Activated naive CD4-positive, alpha-beta T cell treated with anti-CD3 and anti-CD28 coated beads for 36 hours (primary cell): ENCODE measurements at regions of chr10 and their contacts with region 1.

Region 1: DNA sequence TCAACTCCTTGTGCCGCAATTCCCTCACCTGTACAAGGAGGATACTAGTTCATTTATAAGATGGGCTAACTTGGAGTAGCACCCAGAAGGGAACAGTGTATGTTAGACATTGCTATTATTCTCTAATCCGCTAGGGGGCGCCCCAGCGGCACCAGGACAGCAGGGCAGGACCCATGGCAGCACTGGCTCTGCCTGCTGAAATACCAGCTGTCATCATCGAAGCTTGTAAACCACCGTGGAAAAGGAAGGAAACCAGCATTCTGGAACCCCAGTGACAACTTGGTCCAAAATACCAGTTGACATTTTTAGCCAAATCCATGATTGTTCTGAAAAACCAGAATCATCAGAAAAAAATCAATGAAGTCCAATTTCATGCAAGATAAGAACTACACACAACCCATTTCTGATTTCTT is 134.4 kb downstream of the ITGA8 start:
- DNase-seq: peak; percentile 64
- H3K4me3 Mint-ChIP-seq: no peak overlapping the region
- H3K27ac Mint-ChIP-seq: no peak overlapping the region
- H3K4me1 Mint-ChIP-seq: no peaks in the 10 kb centered on the region
- H3K27me3 Mint-ChIP-seq: peaks cover 9% of the 10 kb centered on the region

Region 2: GRCh38 chr10:15548381-15548780 is 36.9 kb before region 1 on chr10:
- CTCF ChIA-PET with region 1: no interaction called
- intact Hi-C with region 1: no loop called
- DNase-seq: no peak
- H3K4me3 Mint-ChIP-seq: no peak overlapping the region
- H3K27ac Mint-ChIP-seq: no peak overlapping the region
- H3K4me1 Mint-ChIP-seq: no peaks in the 10 kb centered on the region
- H3K27me3 Mint-ChIP-seq: peaks cover 9% of the 10 kb centered on the region

Region 3: DNA sequence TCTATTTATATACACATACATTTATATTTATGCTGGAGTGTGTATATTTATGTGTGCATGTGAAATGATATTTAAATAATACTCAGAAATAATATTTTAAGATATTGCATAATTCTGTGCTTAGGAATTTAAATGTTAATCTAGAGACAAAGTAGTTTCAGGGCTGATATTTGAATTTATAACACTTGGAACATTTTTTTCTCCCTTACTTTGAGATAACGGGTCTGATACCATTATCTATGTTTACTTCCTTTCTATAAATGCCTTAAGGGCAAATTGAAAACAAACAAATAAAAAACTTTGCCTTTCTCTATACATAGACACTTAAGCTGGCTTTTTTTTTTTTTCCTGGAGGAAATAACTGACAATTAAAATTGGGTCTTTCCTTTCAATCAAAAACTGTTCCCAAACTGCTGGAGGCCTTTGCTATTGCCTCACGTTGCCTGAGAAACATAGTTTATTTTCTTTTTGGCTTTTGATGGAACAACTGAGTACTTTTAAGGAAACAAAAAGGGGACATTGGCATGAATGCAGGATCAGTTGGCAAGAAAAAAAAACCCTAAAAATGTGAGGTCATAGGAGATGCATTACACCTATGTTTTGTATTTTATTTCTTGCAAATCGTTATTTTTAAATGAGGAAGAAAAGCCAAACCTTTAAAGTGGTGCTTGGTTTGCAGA is 35.7 kb after region 1 on chr10:
- CTCF ChIA-PET with region 1: no interaction called
- intact Hi-C with region 1: no loop called
- DNase-seq: no peak
- H3K4me3 Mint-ChIP-seq: no peak overlapping the region
- H3K27ac Mint-ChIP-seq: no peak overlapping the region
- H3K4me1 Mint-ChIP-seq: no peaks in the 10 kb centered on the region
- H3K27me3 Mint-ChIP-seq: no peaks in the 10 kb centered on the region

Region 4: DNA sequence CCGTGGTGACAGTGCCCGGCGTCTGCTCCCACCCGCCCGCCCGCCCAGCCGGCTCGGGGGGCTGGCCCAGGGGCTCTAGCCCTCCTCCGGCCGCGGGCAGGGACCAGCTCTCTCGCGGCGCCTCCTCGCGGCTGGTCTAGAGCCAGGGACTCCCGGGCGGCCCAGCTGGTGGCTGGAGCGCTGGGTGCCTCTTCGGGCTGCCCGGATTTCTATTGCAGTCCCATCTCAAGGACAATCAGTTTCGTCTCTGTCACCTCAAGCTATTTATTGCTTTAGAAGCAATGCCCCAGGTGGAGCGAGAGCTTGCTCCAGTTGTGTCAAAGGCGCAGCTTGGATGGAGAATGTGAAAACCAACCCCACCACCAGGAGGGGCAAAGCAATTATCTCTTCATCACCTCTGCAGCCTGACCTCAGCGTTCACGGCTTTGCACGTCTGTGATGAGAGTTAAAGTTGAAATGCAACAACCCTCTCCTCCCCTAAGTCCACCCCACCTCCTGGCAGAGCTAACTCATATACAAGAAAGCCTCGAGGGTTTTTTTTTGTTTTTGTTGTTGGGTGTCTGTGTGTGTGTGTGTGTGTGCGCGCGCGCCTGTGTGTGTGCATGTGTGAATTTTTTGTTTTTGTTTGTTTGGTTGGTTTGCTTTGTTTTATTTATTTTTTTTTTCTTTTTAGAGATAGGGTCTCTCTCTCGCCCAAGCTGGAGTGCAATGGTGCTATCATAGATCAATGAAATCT is 134.8 kb after region 1 on chr10 and contains the start of gene ITGA8:
- CTCF ChIA-PET with region 1: interaction called, 3 read pairs
- intact Hi-C with region 1: loop called (anchors 5 kb)
- DNase-seq: peak; percentile 14
- H3K4me3 Mint-ChIP-seq: no peak within 1 kb of the TSS
- H3K27ac Mint-ChIP-seq: no peak within 1 kb of the TSS
- H3K4me1 Mint-ChIP-seq: peaks cover 5% of the 10 kb centered on the region
- H3K27me3 Mint-ChIP-seq: peaks cover 42% of the 10 kb centered on the region
- total RNA-seq, gene ITGA8: not detected

Region 5: DNA sequence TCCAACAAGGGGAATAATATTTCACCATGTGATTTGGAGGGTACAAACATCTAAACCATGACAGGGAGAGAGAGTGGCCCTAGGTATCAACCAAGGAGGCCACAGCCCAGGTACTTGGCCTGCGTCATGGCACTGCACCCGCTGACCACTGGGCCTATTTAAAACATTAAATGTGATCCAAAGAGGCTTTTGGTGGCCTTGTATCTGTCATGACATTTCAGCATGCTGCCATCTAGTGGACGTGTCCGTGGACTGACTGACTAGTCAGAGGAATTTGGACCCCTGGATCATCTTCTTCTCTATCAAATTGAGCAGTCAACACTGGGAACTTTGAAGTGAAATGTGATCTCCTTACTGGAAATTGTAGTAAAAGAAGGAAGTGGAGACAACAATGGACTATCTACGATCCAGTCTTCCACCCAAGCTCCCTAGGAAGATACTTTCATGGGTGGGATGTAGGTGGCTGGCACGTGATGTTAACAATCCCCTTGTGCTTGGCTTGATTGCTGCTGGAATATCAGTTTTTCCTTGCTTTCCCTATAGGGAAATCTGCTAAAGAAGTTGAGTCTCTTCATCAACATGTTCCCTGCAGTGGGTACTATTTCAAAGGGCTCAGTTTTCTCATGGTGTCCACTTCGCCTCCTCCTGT is 159.0 kb after region 1 on chr10:
- CTCF ChIA-PET with region 1: no interaction called
- intact Hi-C with region 1: loop called (anchors 5 kb)
- DNase-seq: peak; percentile 69
- H3K4me3 Mint-ChIP-seq: no peak overlapping the region
- H3K27ac Mint-ChIP-seq: no peak overlapping the region
- H3K4me1 Mint-ChIP-seq: no peaks in the 10 kb centered on the region
- H3K27me3 Mint-ChIP-seq: peaks cover 10% of the 10 kb centered on the region

Region 6: GRCh38 chr10:15824498-15824897 is 239.2 kb after region 1 on chr10:
- CTCF ChIA-PET with region 1: no interaction called
- intact Hi-C with region 1: loop called (anchors 1 kb)
- DNase-seq: no peak
- H3K4me3 Mint-ChIP-seq: no peak overlapping the region
- H3K27ac Mint-ChIP-seq: no peak overlapping the region
- H3K4me1 Mint-ChIP-seq: no peaks in the 10 kb centered on the region
- H3K27me3 Mint-ChIP-seq: no peaks in the 10 kb centered on the region